ENCODE measurements at regions of chr6 and their contacts with region 1.

Region 1: GRCh38 chr6:133887156-133887879 is 1.6 kb upstream of the TCF21 start:
- DNase-seq: no peak
- H3K4me3 ChIP-seq: no peak overlapping the region
- H3K27ac ChIP-seq: no peak overlapping the region
- H3K4me1 ChIP-seq: no peaks in the 10 kb centered on the region
- H3K27me3 ChIP-seq: peaks cover 100% of the 10 kb centered on the region
- CTCF ChIP-seq: no peak

Region 2: GRCh38 chr6:133973109-133973971 is 86.0 kb after region 1 on chr6:
- CTCF ChIA-PET with region 1: no interaction called
- POLR2A ChIA-PET with region 1: interaction called, 10 read pairs
- intact Hi-C with region 1: no loop called
- DNase-seq: peak; percentile 65
- H3K4me3 ChIP-seq: no peak overlapping the region
- H3K27ac ChIP-seq: no peak overlapping the region
- H3K4me1 ChIP-seq: peaks cover 4% of the 10 kb centered on the region
- H3K27me3 ChIP-seq: no peaks in the 10 kb centered on the region
- CTCF ChIP-seq: peak; percentile 76